HCT116 (cell line): ENCODE measurements at regions of chr11 and their contacts with region 1.

Region 1: GRCh38 chr11:108886660-108887009 is 221.8 kb downstream of the DDX10 start:
- DNase-seq: no peak
- ATAC-seq: 0 out of 2 replicates have a peak, but pooled peaks have one; percentile 35
- H3K4me3 ChIP-seq: no peak overlapping the region
- H3K27ac ChIP-seq: peak overlapping the region; percentile 82
- H3K4me1 ChIP-seq: peaks cover 70 to 75% of the 10 kb centered on the region in 2 experiments
- H3K27me3 ChIP-seq: no peaks in the 10 kb centered on the region
- CTCF ChIP-seq: no peak
- POLR2A ChIP-seq: no peak
- RAD21 ChIP-seq: no peak

Region 2: GRCh38 chr11:108871152-108871551 is 15.5 kb before region 1 on chr11:
- CTCF ChIA-PET with region 1: interaction called, 10 read pairs
- POLR2A ChIA-PET with region 1: interaction called, 6 read pairs
- RAD21 ChIA-PET with region 1: no interaction called
- intact Hi-C with region 1: no loop called
- DNase-seq: no peak
- ATAC-seq: peak; percentile 75
- H3K4me3 ChIP-seq: no peak overlapping the region
- H3K27ac ChIP-seq: peak overlapping the region; percentile 75
- H3K4me1 ChIP-seq: peaks cover 30 to 42% of the 10 kb centered on the region in 2 experiments
- H3K27me3 ChIP-seq: no peaks in the 10 kb centered on the region
- CTCF ChIP-seq: peak; percentile 48 to 72 (median 70); a peak in 5 of 6 replicates
- POLR2A ChIP-seq: no peak
- RAD21 ChIP-seq: peak; percentile 80